Cardiac septum (tissue), 1 donor: ENCODE measurements at regions of chr4 and their contacts with region 1.

Region 1: DNA sequence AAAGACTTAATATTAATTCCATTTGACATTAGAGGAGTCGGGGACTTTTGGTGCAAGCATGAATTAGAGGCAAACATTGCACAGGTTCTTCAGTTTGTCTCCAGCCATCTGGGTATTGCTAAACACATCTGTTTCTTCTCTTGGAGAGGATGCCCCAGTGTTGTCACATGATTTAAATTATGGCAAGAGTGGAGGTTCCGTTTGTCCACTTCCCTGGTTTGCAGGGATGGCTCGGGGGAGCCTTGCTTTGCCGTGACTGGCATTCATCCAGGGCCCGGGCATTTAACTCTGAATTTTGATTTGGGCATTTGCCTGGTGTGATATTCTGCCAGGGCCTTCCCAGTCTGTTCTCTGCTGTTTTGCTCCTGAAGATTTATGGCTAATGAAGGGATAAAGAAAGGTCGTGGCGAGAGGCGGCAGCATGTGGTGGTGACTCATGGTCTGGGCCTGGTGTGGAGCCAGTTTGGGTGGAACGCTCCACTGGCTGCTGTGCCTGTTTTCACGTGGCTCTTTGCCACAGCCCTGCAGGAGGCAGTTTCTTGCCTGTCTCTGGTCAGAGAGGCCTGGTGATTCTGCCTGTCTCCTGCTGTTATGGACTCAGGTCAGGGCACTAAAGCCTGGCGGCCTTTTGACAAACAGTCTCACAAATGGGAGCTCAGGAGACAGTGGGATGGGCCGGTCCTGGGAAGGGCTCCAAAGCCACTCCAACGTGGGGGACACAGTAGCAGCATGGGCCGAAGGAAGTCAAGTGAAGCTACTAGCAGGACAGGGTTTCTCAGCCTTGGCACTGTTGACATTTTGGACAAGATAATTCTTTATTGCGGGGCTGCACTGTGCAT is 99.4 kb upstream of the PGRMC2 start:
- DNase-seq: peak; percentile 91

Region 2: GRCh38 chr4:128355301-128355700 is 31.7 kb before region 1 on chr4:
- intact Hi-C with region 1: loop called (anchors 1 kb)
- DNase-seq: no peak

Region 3: GRCh38 chr4:128427832-128428366 is 40.9 kb after region 1 on chr4:
- intact Hi-C with region 1: loop called (anchors 5 kb)
- DNase-seq: no peak

Region 4: GRCh38 chr4:128782076-128782715 is 395.2 kb after region 1 on chr4:
- intact Hi-C with region 1: no loop called
- DNase-seq: no peak